Left cardiac atrium (tissue), 4 donors: ENCODE measurements at regions of chr12 and their contacts with region 1.

Region 1: GRCh38 chr12:76621582-76622024 is 62.0 kb upstream of the OSBPL8 start:
- DNase-seq: peak; percentile 63
- ATAC-seq: peak; percentile 65 to 86

Region 2: DNA sequence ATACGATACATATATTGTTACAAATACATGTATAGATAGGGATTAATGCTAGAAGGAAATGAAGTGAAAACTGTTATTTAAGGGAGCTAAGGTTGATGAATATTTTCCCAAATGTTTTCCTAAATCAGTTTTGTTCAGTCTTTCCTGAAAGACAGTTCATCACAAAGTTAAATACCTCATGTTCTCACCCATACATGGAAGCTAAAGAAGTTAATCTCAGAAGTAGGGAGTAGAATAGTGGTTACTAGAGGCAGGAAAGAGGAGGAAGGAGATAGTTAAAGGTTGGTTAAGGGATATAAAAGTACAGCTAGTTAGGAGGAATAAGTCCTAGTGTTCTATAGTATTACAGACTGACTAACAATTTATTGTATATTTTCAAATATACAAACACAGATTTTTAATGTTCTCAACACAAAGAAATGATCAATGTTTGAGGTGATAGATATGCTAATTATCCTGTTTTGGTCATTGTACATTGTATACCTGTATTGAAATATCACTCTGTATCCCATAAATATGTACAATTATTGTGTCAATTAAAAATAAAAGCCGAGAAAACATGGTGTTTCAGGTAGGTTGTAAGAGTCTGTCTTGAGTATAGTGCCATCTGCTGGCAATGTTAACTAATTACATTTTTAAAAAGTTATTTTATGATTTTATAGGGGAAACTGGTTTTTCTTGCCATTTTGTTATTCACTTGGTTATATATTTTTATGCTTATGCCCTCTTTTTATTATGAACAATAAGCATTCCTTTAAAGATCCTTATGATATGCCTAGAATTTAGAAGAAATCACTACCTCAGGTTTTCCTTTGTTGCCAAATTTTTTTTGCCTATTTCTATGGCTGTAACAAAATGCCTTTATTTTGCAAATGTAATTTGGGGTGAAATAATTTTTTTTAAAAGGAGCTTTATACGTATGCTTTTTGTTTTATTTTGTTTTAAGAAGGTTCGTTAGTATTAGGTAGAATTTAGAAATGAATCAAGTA is 169.3 kb after region 1 on chr12:
- intact Hi-C with region 1: loop called (anchors 1 to 5 kb)
- DNase-seq: no peak
- ATAC-seq: no peak

Region 3: DNA sequence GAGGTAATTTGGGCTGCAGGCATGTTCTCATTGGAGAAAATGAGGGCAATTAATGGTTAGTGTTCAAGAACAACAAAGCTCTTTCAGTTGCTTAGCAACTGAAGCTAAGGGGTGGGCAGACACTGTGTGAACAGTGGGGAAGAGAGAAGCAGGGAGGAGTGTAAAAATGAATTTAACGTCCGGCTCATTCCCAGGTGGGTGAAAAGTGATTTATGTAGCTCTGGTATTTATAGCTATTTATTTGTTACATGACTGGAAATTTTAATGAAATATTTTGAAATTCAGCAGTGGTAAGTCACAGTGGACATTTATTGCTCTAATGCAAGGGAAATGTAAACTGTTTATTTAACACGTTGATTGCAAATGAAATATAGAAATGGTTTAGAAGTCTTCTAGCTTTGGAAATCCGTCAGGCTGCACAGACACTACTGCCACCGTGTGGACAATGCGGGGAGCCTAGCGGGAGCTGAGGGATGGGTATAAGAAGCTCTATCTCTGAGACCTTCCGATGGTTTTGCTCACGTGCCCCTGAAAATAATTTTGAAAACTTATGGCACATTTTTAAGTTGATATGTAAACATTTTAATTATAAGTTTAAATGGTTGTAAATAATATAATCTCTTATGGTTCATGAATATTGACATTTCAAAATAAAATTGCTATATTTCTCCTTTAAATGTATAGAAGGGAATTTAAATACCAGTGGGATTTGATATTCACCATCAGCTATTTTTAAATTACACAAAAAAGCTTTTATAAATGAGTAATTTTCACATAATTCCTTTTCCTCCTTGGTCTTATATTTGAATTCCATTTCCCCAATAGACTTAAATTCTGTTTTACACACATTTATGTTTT is 389.3 kb after region 1 on chr12:
- intact Hi-C with region 1: loop called (anchors 2 to 10 kb)
- DNase-seq: peak; percentile 65
- ATAC-seq: peak; percentile 84 to 86

Region 4: DNA sequence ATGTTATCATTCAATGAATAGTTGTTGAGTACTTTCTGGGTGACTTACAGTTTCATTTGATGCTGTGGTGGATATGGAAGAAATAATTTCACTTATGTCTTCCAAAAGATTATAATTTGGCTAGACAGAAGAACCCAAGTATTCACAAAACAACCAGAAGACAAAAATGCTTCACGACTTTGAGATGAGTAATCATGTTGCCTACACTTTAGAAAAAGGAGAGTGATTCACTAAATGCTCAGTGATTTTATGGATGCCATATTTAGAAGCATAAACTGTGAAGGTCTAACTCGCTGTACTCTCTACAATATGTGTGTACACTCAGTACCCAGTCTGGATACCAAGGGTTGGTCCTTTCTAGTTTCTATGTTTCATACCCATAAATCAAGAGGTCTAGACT is 545.1 kb after region 1 on chr12:
- intact Hi-C with region 1: no loop called
- DNase-seq: no peak
- ATAC-seq: no peak